RWPE1 (cell line): ENCODE measurements at regions of chr5 and their contacts with region 1.

Region 1: DNA sequence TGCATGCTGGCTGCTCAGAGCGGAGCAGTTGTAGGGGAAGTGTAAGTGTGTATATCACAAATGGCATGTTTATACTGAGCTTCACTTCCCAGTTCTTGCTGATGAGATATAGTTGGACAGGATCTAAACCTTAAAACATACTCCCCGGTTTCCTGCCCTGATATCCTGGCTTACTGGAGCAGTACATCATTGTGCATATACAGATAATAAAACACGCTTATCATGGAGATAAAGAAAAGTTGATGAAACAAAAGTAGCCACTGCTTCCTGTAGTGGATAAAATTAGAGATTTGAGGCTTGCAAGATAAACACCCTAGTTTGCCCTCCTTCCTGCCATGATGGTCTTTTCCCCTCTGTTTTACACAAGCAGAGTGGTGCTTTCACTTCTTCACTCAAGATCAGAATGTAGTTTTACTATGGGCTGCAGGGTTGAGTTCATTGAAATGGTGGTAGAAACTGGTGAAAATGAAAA is 15.0 kb downstream of the NPR3 start:
- DNase-seq: no peak
- H3K27ac ChIP-seq: no peak overlapping the region
- CTCF ChIP-seq: no peak

Region 2: DNA sequence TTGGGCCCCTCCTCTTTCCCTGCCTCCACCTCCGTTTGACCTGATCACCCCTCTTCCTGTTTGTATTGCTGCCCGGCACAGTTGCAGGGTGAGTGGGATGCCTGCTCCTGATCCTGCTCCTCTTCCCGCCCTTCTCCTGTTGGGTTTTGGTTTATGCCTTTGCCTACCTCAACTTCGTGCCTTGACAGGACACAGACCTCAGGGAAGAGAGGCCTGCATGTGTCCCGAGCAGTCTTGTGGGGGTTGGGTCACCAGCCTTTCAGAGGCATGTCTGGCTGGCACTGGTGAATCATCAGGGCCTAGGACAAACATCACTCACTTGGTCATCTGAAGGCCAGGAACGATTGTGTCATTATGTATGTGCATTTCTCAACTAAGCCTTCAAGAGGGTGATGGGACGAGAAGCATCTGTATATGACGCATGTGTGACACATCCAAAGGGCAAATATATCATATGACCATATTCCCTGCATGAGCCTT is 41.9 kb after region 1 on chr5:
- CTCF ChIA-PET with region 1: interaction called, 11 read pairs
- POLR2A ChIA-PET with region 1: no interaction called
- DNase-seq: peak; percentile 92
- H3K27ac ChIP-seq: peak overlapping the region; percentile 73
- CTCF ChIP-seq: no peak

Region 3: DNA sequence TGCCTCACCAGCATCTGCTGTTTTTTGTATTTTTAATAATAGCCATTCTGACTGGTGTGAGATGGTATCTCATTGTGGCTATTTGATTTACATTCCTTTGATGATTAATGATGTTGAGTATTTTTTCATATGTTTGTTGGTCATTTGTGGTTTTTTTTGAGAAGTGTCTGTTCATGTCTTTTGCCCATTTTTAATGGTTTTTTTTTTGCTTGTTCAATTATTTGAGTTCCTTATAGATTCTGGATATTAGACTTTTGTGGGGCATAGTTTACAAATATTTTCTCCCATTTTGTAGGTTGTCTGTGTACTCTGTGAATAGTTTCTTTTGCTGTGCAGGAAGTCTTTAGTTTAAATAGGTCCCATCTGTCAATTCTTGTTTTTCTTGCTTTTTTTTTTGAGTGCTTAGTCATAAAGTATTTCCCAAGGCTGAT is 133.1 kb after region 1 on chr5:
- CTCF ChIA-PET with region 1: no interaction called
- POLR2A ChIA-PET with region 1: no interaction called
- DNase-seq: no peak
- H3K27ac ChIP-seq: no peak overlapping the region
- CTCF ChIP-seq: no peak

Region 4: GRCh38 chr5:33023649-33024048 is 297.5 kb after region 1 on chr5:
- CTCF ChIA-PET with region 1: no interaction called
- POLR2A ChIA-PET with region 1: no interaction called
- DNase-seq: peak; percentile 11
- H3K27ac ChIP-seq: no peak overlapping the region
- CTCF ChIP-seq: no peak